AG04449 (cell line): ENCODE measurements at regions of chr16 and their contacts with region 1.

Region 1: GRCh38 chr16:12819126-12820117 is 15.7 kb upstream of the CPPED1 start:
- DNase-seq: no peak
- H3K4me3 ChIP-seq: no peak overlapping the region
- CTCF ChIP-seq: peak; percentile 93

Region 2: GRCh38 chr16:12455287-12455798 is 364.1 kb before region 1 on chr16:
- CTCF ChIA-PET with region 1: interaction called, 25 read pairs
- POLR2A ChIA-PET with region 1: no interaction called
- DNase-seq: no peak
- H3K4me3 ChIP-seq: no peak overlapping the region
- CTCF ChIP-seq: peak; percentile 84

Region 3: DNA sequence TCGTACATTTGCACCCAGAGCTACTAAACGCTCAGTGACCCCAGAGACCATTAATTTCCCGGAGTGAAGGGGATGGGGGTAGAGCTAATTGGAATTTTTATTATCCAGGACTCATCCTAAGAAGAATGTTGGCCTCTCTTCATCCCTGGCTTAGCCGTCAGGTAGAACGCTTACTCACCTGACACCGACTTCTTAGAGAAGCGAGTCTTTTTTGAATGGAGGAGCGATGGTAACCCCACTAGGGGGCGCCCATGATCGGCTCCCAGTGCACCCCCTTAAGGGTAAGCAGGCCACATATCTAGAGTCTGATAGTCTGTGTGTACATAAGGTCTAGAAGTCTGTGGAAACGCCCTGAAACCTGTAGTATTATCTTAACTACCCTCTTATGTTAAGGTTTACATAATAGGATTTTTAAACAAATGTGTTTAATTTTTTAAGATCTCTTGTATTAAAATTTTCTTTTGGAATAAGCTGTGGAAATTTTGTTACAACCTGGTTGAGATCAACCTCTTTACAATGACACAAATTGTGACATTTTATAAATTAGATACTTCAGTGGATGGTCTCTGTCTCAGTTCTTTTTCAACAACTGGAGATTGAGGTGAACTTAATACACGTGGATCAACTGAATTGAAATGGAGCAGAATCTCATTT is 245.6 kb before region 1 on chr16:
- CTCF ChIA-PET with region 1: interaction called, 14 read pairs
- POLR2A ChIA-PET with region 1: no interaction called
- DNase-seq: no peak
- H3K4me3 ChIP-seq: no peak overlapping the region
- CTCF ChIP-seq: peak; percentile 43

Region 4: GRCh38 chr16:12891836-12892235 is 72.4 kb after region 1 on chr16:
- CTCF ChIA-PET with region 1: no interaction called
- POLR2A ChIA-PET with region 1: no interaction called
- DNase-seq: no peak
- H3K4me3 ChIP-seq: no peak overlapping the region
- CTCF ChIP-seq: no peak